ENCODE measurements at regions of chr6 and their contacts with region 1.

Region 1: DNA sequence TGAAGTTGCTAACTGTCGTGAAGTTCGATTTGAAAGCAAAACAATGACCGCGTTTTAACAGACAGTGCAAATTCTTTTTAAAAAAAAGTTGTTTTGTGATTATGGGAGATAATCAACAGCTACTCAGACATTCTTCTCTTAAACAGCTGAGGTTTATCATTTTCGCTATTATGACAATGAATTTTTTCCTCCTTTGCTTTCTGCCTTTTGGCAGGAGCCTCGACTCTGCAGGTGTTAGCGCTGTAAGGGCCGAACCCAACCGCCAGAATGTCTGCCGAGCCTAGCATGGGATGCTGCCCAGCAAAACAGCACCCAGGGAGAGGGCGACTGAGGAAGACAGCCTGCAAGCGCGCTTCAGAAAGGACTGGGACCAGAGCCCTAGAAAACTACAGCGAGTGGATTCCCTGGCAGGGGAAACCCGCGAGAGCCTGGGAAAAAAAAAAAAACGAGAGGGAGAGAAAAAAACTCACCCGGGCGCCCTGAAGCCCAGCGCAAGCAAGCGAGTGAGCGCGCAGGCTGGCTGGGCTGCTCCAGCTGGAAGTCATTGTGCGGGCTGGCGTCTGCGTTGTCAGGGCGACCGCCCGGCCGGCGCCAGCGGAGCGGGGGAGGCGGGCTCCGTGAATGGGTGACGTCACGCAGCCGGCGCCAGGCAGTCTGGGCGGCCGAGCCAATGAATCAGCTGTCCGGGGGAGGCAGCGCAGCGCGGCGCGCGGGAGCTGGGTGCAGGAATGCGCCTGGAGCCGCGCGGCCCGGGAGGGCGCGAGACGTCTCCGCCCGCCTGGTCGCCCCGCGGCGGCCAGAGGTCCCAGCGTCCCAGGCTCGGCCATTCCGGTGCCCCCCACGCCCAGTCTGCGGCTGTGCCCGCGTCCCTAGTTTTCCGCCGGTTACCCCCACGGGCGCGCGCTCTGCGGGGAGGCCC is 32.7 kb upstream of the ID4 start:
- DNase-seq: peak; percentile 94
- H3K4me3 ChIP-seq: peak overlapping the region; percentile 86
- H3K27ac ChIP-seq: peak overlapping the region; percentile 94
- H3K4me1 ChIP-seq: peaks cover 56% of the 10 kb centered on the region
- CTCF ChIP-seq: no peak

Region 2: GRCh38 chr6:19472847-19473246 is 331.6 kb before region 1 on chr6:
- CTCF ChIA-PET with region 1: no interaction called
- POLR2A ChIA-PET with region 1: no interaction called
- intact Hi-C with region 1: loop called (anchors 5 kb)
- DNase-seq: peak; percentile 51
- H3K4me3 ChIP-seq: no peak overlapping the region
- H3K27ac ChIP-seq: no peak overlapping the region
- H3K4me1 ChIP-seq: no peaks in the 10 kb centered on the region
- CTCF ChIP-seq: peak; percentile 83

Region 3: GRCh38 chr6:19587238-19587942 is 217.1 kb before region 1 on chr6:
- CTCF ChIA-PET with region 1: no interaction called
- POLR2A ChIA-PET with region 1: interaction called, 6 read pairs
- intact Hi-C with region 1: loop called (anchors 2 kb)
- DNase-seq: peak; percentile 85
- H3K4me3 ChIP-seq: peak overlapping the region; percentile 42
- H3K27ac ChIP-seq: peak overlapping the region; percentile 93
- H3K4me1 ChIP-seq: peaks cover 52% of the 10 kb centered on the region
- CTCF ChIP-seq: no peak

Region 4: GRCh38 chr6:19597809-19598320 is 206.6 kb before region 1 on chr6:
- CTCF ChIA-PET with region 1: interaction called, 4 read pairs
- POLR2A ChIA-PET with region 1: interaction called, 38 read pairs
- intact Hi-C with region 1: loop called (anchors 1 kb)
- DNase-seq: peak; percentile 83
- H3K4me3 ChIP-seq: peak overlapping the region; percentile 31
- H3K27ac ChIP-seq: peak overlapping the region; percentile 95
- H3K4me1 ChIP-seq: peaks cover 80% of the 10 kb centered on the region
- CTCF ChIP-seq: no peak

Region 5: GRCh38 chr6:19603721-19604120 is 200.7 kb before region 1 on chr6:
- CTCF ChIA-PET with region 1: interaction called, 4 read pairs
- POLR2A ChIA-PET with region 1: interaction called, 38 read pairs
- intact Hi-C with region 1: no loop called
- DNase-seq: no peak
- H3K4me3 ChIP-seq: no peak overlapping the region
- H3K27ac ChIP-seq: no peak overlapping the region
- H3K4me1 ChIP-seq: peaks cover 46% of the 10 kb centered on the region
- CTCF ChIP-seq: no peak

Region 6: DNA sequence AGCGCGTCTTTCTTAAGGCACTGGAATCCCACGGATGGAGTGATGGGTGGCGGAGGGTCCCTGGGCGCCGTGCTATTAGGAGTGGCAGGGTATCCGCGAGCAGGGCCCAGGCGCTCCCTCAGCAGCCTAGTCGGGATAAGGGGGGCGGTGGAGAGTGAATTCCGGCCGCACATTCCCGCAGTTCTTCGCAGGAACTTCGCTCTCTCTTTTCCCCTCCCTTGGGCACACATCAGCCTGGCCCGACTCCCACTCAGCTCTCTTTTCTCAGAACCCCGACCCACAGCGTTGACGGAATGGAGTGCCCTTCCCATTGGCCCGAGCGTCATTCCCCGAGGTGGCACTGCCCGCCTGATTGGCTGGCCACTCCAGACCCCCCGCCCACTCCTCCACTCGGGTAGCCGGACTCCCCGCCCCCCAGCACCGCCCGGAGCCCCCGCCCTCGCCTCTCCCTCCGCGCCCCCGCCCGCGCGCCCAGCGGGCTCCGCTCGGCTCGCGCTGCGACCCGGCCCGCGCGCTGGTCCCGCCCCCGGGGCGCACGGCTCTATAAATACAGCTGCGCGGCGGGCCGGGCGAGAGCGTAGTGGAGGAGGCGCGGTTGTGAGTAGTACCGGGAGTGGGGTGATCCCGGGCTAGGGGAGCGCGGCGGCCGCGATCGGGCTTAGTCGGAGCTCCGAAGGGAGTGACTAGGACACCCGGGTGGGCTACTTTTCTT is 32.5 kb after region 1 on chr6 and contains the start of gene ID4:
- CTCF ChIA-PET with region 1: interaction called, 4 read pairs
- POLR2A ChIA-PET with region 1: interaction called, 76 read pairs
- intact Hi-C with region 1: loop called (anchors 1 kb)
- DNase-seq: no peak
- H3K4me3 ChIP-seq: peak within 1 kb of the TSS; percentile 80
- H3K27ac ChIP-seq: peak within 1 kb of the TSS; percentile 96
- H3K4me1 ChIP-seq: peaks cover 41% of the 10 kb centered on the region
- CTCF ChIP-seq: no peak
- total RNA-seq, gene ID4: 2.0 and 2.1 TPM in 2 replicates

Region 7: DNA sequence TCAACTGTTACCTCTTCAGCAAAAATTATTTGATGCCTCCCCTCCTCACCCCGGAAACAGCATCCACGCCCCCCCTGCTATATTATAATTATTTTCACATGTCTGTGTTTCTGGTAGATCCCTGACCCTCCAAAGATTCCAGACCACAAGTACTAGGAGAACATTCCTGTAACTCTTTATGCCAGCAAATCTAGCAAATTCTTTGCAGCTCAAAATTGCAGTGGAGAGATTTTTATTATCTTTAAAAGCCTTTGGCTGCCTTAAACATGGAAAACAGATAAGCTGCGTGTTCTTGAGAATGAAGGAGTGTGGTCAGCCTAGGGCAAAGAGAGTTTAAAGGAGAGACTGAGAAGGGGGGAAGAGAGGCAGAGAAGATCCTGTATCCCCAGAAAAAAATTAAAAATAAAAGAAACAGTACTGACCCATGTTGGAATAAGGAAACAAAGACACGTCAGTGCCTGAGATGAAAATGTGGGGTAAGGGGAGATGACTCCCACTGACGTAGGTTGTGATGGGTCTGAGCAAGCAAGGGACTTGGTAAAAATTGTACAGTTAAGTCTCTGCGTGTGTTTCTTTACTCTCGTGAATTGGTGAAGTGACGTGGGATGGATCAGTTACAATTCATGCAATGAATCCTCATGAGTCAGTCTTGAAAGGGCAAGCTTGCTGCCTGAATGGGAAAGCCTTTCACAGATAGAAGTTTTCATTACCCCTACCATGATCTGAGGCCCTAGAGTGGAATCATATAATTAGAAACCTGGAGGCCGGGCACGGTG is 41.0 kb after region 1 on chr6:
- CTCF ChIA-PET with region 1: interaction called, 4 read pairs
- POLR2A ChIA-PET with region 1: interaction called, 76 read pairs
- intact Hi-C with region 1: no loop called
- DNase-seq: no peak
- H3K4me3 ChIP-seq: no peak overlapping the region
- H3K27ac ChIP-seq: no peak overlapping the region
- H3K4me1 ChIP-seq: peaks cover 64% of the 10 kb centered on the region
- CTCF ChIP-seq: no peak